ENCODE measurements at regions of chr16 and their contacts with region 1.

Region 1: GRCh38 chr16:2867987-2868789 is 10.2 kb upstream of the PRSS22 start:
- DNase-seq: peak; percentile 97 to 99 (median 99)
- H3K4me3 ChIP-seq: peak overlapping the region; percentile 42 to 76 (median 65)
- H3K27ac ChIP-seq: peak overlapping the region; percentile 66 to 89
- H3K4me1 ChIP-seq: peaks cover 0 to 11% (median 7%) of the 10 kb centered on the region in 4 experiments
- H3K27me3 ChIP-seq: peaks cover 0 to 4% (median 0%) of the 10 kb centered on the region in 5 experiments

Region 2: DNA sequence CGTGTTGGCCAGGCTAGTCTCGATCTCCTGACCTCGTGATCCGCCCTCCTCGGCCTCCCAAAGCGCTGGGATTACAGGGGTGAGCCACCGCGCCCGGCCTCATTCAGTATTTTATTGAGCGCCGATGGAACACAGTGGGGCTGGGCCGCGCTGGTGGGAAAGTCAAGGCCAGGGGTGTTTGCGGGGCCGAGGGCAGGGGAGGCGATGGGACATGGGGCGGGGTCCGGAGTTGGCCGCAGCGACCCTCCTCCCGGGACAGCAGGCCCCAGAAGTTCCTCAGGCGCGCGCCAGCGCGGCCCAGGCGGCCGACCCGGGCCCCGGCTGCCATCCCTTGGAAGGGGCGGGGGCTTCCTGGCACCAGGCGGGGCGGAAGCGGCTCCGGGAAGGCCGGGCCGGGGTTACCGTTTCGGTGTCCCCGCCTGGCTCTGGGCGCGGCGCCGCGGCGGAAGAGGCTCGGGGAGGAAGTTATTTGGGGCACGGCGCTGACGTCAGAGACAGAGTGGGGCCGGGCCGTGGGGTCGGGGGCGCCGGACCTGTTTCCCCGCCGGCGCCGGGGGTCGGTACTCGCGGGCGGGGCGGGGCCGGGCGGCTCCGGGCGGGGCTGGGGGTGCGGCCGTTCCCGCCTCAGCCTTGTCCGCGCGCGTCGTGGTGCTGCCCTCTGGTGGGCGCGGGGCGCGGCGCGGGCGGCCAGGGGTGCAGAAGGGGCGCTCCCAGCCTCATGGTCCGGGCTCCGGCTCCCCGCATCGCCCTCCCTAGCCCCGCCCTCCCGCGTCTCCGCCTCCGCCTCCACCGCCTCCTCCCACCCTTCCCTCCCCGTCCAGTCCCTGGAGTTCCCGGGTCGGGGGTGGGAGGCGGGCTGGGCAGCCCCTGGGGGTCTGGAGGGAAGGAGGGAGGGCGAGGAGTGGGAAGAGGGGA is 147.2 kb before region 1 on chr16:
- CTCF ChIA-PET with region 1: no interaction called
- POLR2A ChIA-PET with region 1: no interaction called
- DNase-seq: peak; percentile 92 to 95 (median 94)
- H3K4me3 ChIP-seq: peak overlapping the region; percentile 32 to 81 (median 60)
- H3K27ac ChIP-seq: peak overlapping the region in 1 of 2 experiments; percentile 49
- H3K4me1 ChIP-seq: peaks cover 0 to 38% (median 29%) of the 10 kb centered on the region in 4 experiments
- H3K27me3 ChIP-seq: peaks cover 0 to 5% (median 0%) of the 10 kb centered on the region in 5 experiments

Region 3: GRCh38 chr16:2764718-2765117 is 103.5 kb before region 1 on chr16:
- CTCF ChIA-PET with region 1: no interaction called
- POLR2A ChIA-PET with region 1: no interaction called
- DNase-seq: no peak
- H3K4me3 ChIP-seq: no peak overlapping the region
- H3K27ac ChIP-seq: no peak overlapping the region
- H3K4me1 ChIP-seq: no peaks in the 10 kb centered on the region
- H3K27me3 ChIP-seq: no peaks in the 10 kb centered on the region

Region 4: GRCh38 chr16:2854700-2855309 is 13.4 kb before region 1 on chr16:
- CTCF ChIA-PET with region 1: interaction called, 11 read pairs
- POLR2A ChIA-PET with region 1: interaction called, 4 read pairs
- DNase-seq: no peak
- H3K4me3 ChIP-seq: no peak overlapping the region
- H3K27ac ChIP-seq: no peak overlapping the region
- H3K4me1 ChIP-seq: peaks cover 0 to 20% (median 12%) of the 10 kb centered on the region in 4 experiments
- H3K27me3 ChIP-seq: peaks cover 0 to 61% (median 16%) of the 10 kb centered on the region in 5 experiments

Region 5: DNA sequence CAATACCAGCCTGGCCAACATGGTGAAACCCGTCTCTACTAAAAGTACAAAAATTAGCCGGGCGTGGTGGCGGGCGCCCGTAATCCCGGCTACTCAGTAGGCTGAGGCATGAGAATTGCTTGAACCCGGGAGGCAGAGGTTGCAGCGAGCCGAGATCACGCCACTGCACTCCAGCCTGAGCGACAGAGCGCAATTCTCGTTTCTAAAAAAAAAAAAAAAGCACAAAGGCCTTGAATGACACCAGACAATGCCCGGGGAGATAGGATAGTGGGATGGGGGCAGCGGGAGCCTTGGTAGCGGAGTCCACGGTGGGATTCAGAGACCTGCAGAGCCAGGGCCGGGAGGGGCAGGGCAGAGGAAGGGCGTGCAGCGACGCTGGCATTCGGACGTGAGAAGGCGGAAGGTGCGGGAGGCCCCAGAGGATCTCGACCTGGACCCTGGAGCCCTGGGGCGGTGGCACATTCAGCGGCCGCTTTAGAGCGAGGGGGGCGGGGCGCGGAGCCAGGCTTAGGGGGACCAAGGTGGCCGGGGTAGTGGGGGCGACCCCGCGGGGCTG is 13.8 kb after region 1 on chr16:
- CTCF ChIA-PET with region 1: interaction called, 13 read pairs
- POLR2A ChIA-PET with region 1: interaction called, 4 read pairs
- DNase-seq: peak; percentile 26 to 61 (median 49)
- H3K4me3 ChIP-seq: peak overlapping the region; percentile 50 to 94 (median 79)
- H3K27ac ChIP-seq: peak overlapping the region in 1 of 2 experiments; percentile 86
- H3K4me1 ChIP-seq: peaks cover 0 to 13% (median 13%) of the 10 kb centered on the region in 4 experiments
- H3K27me3 ChIP-seq: no peaks in the 10 kb centered on the region

Region 6: DNA sequence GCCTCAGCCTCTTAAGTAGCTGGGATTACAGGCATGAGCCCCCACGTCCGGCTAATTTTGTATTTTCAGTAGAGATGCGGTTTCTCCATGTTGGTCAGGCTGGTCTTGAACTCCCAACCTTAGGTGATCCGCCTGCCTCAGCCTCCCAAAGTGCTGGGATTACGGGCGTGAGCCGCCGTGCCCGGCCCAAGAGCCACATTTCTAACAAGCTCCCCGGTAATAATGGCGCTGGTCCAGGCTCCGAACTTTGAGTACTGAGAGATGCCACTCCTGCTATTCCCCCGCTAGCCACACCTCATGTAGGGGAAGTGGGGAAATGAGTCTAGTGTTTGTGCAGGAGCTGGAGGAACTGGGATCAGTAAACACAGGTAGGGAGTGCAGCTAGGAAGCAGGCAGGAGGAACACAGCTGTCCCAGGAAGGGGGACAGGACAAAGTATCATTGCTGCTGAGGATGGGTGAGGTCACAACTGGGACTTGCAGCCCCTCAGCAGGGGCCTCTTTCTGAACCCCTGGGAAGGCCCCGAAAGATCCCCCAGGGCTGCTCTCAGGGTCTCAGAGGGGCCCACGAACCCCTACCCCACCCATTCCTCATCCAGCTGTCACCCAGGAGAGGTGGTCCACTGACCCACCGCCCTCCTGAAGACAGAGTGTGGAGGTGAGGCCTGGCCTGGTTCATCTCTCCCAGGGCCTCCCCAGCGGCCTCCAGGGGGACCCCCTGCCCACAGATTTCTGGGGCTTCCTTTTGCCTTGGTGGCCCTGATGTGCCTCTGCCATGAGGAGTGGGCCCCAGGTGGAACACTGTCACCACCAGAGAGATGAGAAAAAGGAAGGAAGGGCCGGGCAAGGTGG is 92.2 kb after region 1 on chr16:
- CTCF ChIA-PET with region 1: no interaction called
- POLR2A ChIA-PET with region 1: no interaction called
- DNase-seq: no peak
- H3K4me3 ChIP-seq: no peak overlapping the region
- H3K27ac ChIP-seq: no peak overlapping the region
- H3K4me1 ChIP-seq: peaks cover 0 to 46% (median 39%) of the 10 kb centered on the region in 4 experiments
- H3K27me3 ChIP-seq: peaks cover 0 to 38% (median 18%) of the 10 kb centered on the region in 5 experiments

Measured in common myeloid progenitor, CD34-positive (primary cell).